ENCODE measurements at regions of chr19 and their contacts with region 1.

Region 1: DNA sequence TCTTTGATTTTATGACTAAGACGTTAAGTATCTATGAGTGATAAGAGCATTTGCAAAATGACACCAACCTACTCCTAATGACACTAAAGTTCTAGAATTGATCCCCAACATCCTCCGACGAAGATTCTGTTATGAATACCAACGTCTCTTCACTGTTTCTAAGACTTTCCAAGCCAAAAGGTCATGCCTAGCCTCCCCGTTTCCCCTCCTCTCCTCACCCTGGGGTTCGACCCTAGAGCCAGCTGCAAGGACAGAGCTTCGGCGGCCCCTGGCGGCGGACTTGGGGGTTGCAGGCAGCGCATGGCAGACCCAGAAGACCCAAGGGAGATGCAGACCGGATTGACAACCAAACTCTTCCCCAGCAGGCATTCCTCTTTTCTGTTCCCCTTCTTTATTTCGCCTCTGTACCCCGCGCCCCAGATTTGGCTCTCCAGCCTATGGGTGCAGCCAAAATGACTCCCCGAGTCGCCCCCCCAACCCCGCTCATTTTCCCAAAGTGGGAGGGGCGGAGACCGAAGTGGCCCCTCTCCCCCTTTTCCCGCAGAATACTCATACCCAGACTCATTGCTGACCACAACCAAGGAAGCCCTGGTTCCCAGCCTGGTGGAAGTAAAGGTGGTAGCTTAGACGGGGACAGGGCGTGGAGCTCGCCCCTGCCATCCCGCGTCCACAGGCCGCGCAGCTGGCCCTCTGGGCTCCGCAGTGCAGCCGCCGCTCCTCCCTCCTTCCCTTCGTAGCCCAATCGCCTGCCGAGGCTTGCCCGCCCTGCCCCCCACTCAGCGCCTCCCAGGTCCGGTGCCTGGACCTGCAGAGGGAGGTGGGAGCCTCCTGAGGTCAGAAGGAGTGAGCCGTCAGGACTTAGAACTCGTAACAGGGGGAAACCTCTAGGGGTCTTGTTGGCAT is 4.1 kb upstream of the EML2 start:
- DNase-seq: peak; percentile 68 to 93 (median 76)
- ATAC-seq: peak; percentile 36
- H3K4me3 ChIP-seq: peak overlapping the region; percentile 38
- H3K27ac ChIP-seq: peak overlapping the region; percentile 80; the same call in 2 of the 3 replicates
- H3K4me1 ChIP-seq: peaks cover 31 to 62% of the 10 kb centered on the region in 2 experiments
- H3K27me3 ChIP-seq: no peaks in the 10 kb centered on the region
- CTCF ChIP-seq: peak; percentile 96 to 99 (median 97)
- EP300 ChIP-seq: 0 out of 2 replicates have a peak, but pooled peaks have one; percentile 12
- POLR2A ChIP-seq: no peak
- RAD21 ChIP-seq: peak; percentile 95 to 96

Region 2: GRCh38 chr19:45485305-45486077 is 157.8 kb before region 1 on chr19:
- CTCF ChIA-PET with region 1: interaction called, 3 read pairs
- POLR2A ChIA-PET with region 1: no interaction called
- in situ Hi-C with region 1: no loop called
- intact Hi-C with region 1: loop called (anchors 5 kb)
- DNase-seq: peak; percentile 85 to 99 (median 86)
- ATAC-seq: peak; percentile 98
- H3K4me3 ChIP-seq: peak overlapping the region; percentile 54
- H3K27ac ChIP-seq: peak overlapping the region; percentile 49
- H3K4me1 ChIP-seq: peaks cover 3 to 10% of the 10 kb centered on the region in 2 experiments; a peak in 3 of 5 replicates
- H3K27me3 ChIP-seq: no peaks in the 10 kb centered on the region
- CTCF ChIP-seq: peak; percentile 91 to 93 (median 93)
- EP300 ChIP-seq: no peak
- POLR2A ChIP-seq: no peak
- RAD21 ChIP-seq: peak; percentile 46 to 63

Region 3: DNA sequence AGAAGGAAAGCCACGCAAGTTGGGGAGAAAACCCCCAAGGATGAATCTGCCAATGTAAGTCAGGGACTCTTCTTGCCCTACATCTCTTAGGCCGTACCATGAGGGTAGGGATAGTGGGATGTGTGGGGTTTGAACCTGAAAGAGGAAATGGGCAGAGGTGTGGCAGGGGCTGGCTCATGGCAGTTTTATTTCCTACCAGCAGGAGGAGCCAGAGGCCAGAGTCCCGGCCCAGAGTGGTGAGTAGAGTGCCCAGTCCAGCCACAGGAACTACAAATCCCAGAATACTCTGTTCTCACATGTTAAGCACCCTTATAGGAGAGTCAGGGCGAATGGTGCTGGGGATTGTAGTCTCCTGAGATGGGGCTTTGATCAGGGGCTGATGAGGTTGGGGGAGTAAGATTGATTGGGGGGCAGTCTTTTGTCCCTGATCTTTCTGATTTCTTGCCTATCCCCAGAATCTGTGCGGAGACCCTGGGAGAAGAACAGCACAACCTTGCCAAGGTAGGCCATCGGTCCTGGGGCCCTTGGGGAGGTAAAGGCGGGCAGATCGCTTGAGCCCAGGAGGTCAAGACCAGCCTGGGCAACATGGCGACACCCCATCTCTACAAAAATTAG is 119.5 kb before region 1 on chr19:
- CTCF ChIA-PET with region 1: interaction called, 34 read pairs
- POLR2A ChIA-PET with region 1: interaction called, 4 read pairs
- in situ Hi-C with region 1: no loop called
- intact Hi-C with region 1: loop called (anchors 2 kb)
- DNase-seq: peak; percentile 77 to 83 (median 82)
- ATAC-seq: peak; percentile 86
- H3K4me3 ChIP-seq: no peak overlapping the region
- H3K27ac ChIP-seq: no peak overlapping the region
- H3K4me1 ChIP-seq: peaks cover 3 to 32% of the 10 kb centered on the region in 2 experiments; a peak in 3 of 5 replicates
- H3K27me3 ChIP-seq: no peaks in the 10 kb centered on the region
- CTCF ChIP-seq: peak; percentile 86 to 96 (median 95)
- EP300 ChIP-seq: no peak
- POLR2A ChIP-seq: no peak; the same call in 1 of the 2 replicates
- RAD21 ChIP-seq: peak; percentile 69 to 77

Region 4: GRCh38 chr19:45607071-45608029 is 35.9 kb before region 1 on chr19:
- CTCF ChIA-PET with region 1: interaction called, 21 read pairs
- POLR2A ChIA-PET with region 1: interaction called, 4 read pairs
- in situ Hi-C with region 1: no loop called
- intact Hi-C with region 1: loop called (anchors 1 kb)
- DNase-seq: peak; percentile 68 to 79 (median 76)
- ATAC-seq: peak; percentile 90
- H3K4me3 ChIP-seq: no peak overlapping the region
- H3K27ac ChIP-seq: peak overlapping the region; percentile 49
- H3K4me1 ChIP-seq: peaks cover 6 to 12% of the 10 kb centered on the region in 2 experiments; a peak in 4 of 5 replicates
- H3K27me3 ChIP-seq: peaks cover 2 to 4% of the 10 kb centered on the region in 2 experiments; a peak in 4 of 5 replicates
- CTCF ChIP-seq: peak; percentile 86 to 92 (median 90)
- EP300 ChIP-seq: 0 out of 2 replicates have a peak, but pooled peaks have one; percentile 10
- POLR2A ChIP-seq: no peak
- RAD21 ChIP-seq: peak; percentile 71 to 88

Region 5: DNA sequence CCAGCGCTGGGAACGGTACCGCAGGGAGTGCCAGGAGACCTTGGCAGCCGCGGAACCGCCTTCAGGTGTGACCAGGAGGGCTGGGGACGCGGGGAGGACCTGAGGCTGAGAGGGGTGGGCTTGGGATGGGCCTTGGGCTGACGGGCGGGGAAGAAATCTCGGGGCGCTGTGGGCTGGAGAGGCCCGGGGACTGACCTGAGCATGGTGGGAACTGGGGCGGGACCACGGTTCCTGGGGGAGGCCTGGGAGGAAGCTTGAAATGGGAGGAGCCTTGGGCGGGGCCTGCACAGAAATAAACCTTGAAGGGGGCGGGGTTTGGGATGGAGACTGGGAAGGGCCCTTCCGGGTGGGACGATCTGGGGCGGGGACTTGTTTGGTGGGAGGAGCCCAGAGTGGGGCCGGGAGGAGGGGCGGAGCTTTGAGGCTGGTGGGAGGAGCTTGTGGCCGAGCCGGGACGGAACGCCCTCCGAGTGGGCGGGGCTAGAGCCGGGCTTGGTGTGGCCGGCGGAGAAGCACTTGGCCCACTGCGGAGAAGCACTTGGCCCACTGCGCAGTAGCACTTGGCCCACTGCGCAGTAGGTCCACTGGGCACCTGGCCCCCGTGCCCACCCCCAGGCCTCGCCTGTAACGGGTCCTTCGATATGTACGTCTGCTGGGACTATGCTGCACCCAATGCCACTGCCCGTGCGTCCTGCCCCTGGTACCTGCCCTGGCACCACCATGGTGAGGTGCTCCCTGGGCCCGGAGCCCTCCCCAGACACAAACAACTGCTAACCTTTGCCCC is 27.6 kb after region 1 on chr19:
- CTCF ChIA-PET with region 1: no interaction called
- POLR2A ChIA-PET with region 1: interaction called, 26 read pairs
- in situ Hi-C with region 1: no loop called
- intact Hi-C with region 1: no loop called
- DNase-seq: peak; percentile 98 to 100 (median 100)
- ATAC-seq: peak; percentile 84
- H3K4me3 ChIP-seq: peak overlapping the region; percentile 58
- H3K27ac ChIP-seq: peak overlapping the region; percentile 92; the same call in 2 of the 3 replicates
- H3K4me1 ChIP-seq: peaks cover 16 to 40% of the 10 kb centered on the region in 2 experiments; a peak in 4 of 5 replicates
- H3K27me3 ChIP-seq: no peaks in the 10 kb centered on the region
- CTCF ChIP-seq: no peak
- EP300 ChIP-seq: no peak
- POLR2A ChIP-seq: no peak; the same call in 1 of the 2 replicates
- RAD21 ChIP-seq: no peak

Region 6: DNA sequence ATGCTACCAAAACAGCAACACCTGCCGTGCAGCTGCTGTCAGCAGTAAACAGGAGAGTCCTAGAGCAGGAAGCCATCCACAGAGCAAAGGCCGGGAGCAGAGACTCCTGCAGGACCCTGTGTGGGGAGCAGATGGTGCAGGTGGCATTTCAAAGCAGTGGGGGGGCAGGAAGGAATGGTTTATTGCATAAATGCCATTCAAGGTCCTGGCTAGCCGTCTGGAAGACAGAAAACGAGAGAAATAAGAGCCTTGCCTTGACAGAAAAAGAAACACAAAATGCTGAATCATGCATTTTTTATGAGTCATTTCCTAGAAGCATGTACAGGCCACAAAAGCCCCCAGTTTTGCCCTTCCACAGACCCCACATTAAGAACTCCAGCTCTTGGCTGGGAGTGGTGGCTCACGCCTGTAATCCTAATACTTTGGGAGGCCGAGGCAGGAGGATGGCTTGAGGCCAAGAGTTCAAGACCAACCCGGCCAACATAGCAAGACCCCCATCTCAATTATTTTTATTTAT is 166.4 kb after region 1 on chr19:
- CTCF ChIA-PET with region 1: no interaction called
- POLR2A ChIA-PET with region 1: no interaction called
- in situ Hi-C with region 1: no loop called
- intact Hi-C with region 1: no loop called
- DNase-seq: peak; percentile 48 to 71 (median 52)
- ATAC-seq: peak; percentile 72
- H3K4me3 ChIP-seq: no peak overlapping the region
- H3K27ac ChIP-seq: peak overlapping the region; percentile 96
- H3K4me1 ChIP-seq: peaks cover 13 to 18% of the 10 kb centered on the region in 2 experiments; a peak in 4 of 5 replicates
- H3K27me3 ChIP-seq: no peaks in the 10 kb centered on the region
- CTCF ChIP-seq: no peak
- EP300 ChIP-seq: peak; percentile 57
- POLR2A ChIP-seq: no peak
- RAD21 ChIP-seq: no peak

Measured in K562 (cell line).